Left ventricle myocardium inferior (tissue), 1 donor: ENCODE measurements at regions of chr1 and their contacts with region 1.

Region 1: DNA sequence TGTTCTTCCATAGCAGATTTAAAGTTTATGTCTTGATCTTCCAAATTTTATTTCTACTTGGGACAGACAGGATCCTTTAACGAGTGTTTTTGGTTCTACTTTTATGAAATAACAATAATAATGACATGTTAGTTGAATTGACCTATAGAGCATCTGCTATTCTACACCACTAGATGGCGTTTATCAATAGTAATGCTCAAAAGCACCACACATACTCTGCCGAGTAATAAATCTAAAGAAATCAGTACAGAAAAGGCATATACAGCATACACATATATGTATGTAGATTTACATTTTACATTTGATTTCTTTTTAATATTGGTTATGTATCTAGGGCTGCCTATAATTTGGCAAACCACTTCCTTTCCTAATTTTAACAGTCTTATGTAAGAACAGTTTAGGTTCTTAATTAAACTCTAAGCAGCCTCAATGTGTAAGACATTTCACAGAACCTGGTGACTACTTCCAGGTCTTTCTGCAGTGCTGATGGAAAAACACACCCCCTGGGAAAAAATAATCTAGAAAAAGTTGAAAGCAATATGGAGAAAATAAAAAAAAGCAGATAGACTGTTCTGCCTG is 5.9 kb upstream of the SIPA1L2 start:
- DNase-seq: no peak
- H3K4me3 ChIP-seq: no peak overlapping the region
- H3K27ac ChIP-seq: no peak overlapping the region
- H3K4me1 ChIP-seq: peaks cover 7% of the 10 kb centered on the region
- H3K27me3 ChIP-seq: no peaks in the 10 kb centered on the region
- CTCF ChIP-seq: peak; percentile 89

Region 2: GRCh38 chr1:232493869-232494268 is 142.0 kb before region 1 on chr1:
- intact Hi-C with region 1: no loop called
- DNase-seq: no peak
- H3K4me3 ChIP-seq: no peak overlapping the region
- H3K27ac ChIP-seq: no peak overlapping the region
- H3K4me1 ChIP-seq: peaks cover 20% of the 10 kb centered on the region
- H3K27me3 ChIP-seq: no peaks in the 10 kb centered on the region
- CTCF ChIP-seq: no peak

Region 3: GRCh38 chr1:232695621-232696385 is 59.9 kb after region 1 on chr1:
- intact Hi-C with region 1: no loop called
- DNase-seq: no peak
- H3K4me3 ChIP-seq: no peak overlapping the region
- H3K27ac ChIP-seq: no peak overlapping the region
- H3K4me1 ChIP-seq: no peaks in the 10 kb centered on the region
- H3K27me3 ChIP-seq: peaks cover 23% of the 10 kb centered on the region
- CTCF ChIP-seq: no peak

Region 4: DNA sequence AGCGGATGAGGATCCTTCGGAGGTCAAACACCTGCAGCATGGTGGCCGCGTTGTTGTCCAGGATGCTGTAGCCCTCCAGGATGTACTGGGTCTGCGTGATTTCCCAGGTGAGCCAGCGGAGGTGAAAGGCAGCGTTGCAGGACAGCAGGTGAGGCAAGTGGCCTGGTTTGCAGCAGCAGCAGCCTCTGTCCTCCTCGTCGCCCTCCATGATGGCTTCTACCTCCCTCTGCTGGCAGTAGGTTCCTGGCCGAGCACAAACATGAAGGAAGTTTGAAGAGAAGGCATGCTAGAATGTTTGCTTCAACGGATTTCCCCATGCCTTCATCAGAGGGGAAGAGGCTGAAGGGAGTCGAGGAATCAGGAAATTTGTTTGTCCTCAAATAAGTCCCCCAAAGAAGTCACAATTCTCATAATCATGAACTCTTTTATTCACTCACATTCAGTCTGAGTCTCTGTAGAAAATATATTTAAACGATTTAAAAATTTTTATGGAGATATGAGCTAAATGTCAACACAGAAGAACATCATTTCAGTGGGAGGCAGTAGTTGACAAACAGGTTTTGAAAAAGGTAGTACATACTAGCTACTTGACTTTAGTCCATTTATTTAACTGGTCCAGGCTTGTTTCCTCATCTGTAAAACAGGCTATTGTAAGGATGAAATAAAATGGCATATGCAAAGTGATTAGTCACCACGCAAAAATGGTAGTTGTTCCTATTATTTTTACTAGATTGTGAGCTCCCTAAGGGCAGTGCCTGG is 389.5 kb after region 1 on chr1:
- intact Hi-C with region 1: loop called (anchors 5 kb)
- DNase-seq: peak; percentile 36
- H3K4me3 ChIP-seq: no peak overlapping the region
- H3K27ac ChIP-seq: no peak overlapping the region
- H3K4me1 ChIP-seq: peaks cover 8% of the 10 kb centered on the region
- H3K27me3 ChIP-seq: no peaks in the 10 kb centered on the region
- CTCF ChIP-seq: peak; percentile 78

Region 5: DNA sequence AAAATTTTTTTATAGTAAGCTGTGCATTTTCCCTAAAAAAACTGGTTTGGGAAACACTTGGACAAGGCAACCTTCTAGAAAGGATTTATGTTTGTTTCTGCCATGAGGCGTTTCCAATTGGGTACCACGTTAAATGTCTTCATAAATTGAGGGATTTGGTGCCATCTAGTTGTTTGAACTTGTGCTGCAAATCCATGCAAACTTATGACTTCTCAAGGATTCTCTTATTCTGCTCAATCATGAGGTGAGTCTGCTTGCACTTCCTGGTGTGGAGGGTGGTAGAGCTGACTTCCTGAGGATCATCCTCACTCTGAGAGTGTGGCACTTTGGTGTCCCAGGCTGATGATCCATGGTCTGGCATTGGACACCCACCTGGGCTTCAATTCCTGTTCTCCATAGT is 536.4 kb after region 1 on chr1:
- intact Hi-C with region 1: loop called (anchors 5 kb)
- DNase-seq: no peak
- H3K4me3 ChIP-seq: no peak overlapping the region
- H3K27ac ChIP-seq: no peak overlapping the region
- H3K4me1 ChIP-seq: no peaks in the 10 kb centered on the region
- H3K27me3 ChIP-seq: no peaks in the 10 kb centered on the region
- CTCF ChIP-seq: peak; percentile 68

Region 6: DNA sequence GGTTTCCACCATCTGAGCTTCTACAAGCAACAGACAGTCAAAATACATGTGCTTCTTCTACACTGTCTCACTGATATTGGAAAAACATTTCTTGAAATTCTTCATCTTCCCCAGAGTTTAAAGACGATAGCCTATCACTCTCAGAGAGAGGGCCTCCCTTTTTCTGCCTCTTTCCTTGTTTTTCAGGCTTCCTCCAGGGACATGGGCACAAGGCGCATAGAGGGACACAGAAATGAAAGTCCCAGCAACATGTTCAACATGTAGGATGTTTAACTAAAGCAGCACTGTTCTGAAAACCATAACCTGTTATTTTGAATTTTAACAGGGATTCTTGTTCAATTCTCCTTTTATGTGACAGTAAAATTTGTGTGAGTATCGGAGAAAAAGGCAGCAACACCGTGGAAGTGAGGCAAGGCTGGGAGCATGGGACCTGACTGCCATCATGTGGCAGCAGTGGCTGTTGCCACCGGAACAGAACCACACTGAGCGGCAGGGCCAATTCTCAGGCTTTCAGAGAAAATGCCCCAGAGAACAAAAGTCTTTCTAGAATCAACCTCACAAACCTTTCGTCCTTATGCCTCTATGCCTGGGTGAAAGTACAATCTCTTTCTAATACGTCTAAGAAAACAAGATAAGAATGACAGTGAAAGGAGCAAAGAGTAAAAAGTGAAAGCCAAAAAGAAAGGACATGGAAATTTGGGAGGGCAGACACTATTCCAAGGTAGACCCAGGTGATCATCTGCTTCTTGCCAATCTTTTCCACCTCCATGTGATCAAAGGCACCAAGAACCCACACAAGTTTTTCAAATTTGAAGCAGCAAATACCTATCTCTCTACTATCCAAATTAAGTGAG is 605.2 kb after region 1 on chr1:
- intact Hi-C with region 1: loop called (anchors 5 kb)
- DNase-seq: peak; percentile 53
- H3K4me3 ChIP-seq: peak overlapping the region; percentile 37
- H3K27ac ChIP-seq: no peak overlapping the region
- H3K4me1 ChIP-seq: peaks cover 22% of the 10 kb centered on the region
- H3K27me3 ChIP-seq: no peaks in the 10 kb centered on the region
- CTCF ChIP-seq: peak; percentile 92